Stomach (tissue), 19 donors: ENCODE measurements at regions of chr1 and their contacts with region 1.

Region 1: GRCh38 chr1:211705467-211706091 is 30.2 kb upstream of the NEK2 start:
- DNase-seq: no peak
- H3K4me3 ChIP-seq: no peak overlapping the region
- H3K27ac ChIP-seq: no peak overlapping the region
- H3K4me1 ChIP-seq: peaks cover 0 to 6% (median 0%) of the 10 kb centered on the region in 4 donors
- H3K27me3 ChIP-seq: no peaks in the 10 kb centered on the region
- CTCF ChIP-seq: no peak
- EP300 ChIP-seq: no peak
- POLR2A ChIP-seq: no peak

Region 2: GRCh38 chr1:211247921-211248320 is 457.7 kb before region 1 on chr1:
- intact Hi-C with region 1: no loop called
- DNase-seq: peak in 1 of 2 donors; percentile 50
- H3K4me3 ChIP-seq: no peak overlapping the region
- H3K27ac ChIP-seq: no peak overlapping the region
- H3K4me1 ChIP-seq: no peaks in the 10 kb centered on the region
- H3K27me3 ChIP-seq: peaks cover 0 to 2% (median 0%) of the 10 kb centered on the region in 3 donors
- CTCF ChIP-seq: no peak
- EP300 ChIP-seq: no peak
- POLR2A ChIP-seq: no peak

Region 3: DNA sequence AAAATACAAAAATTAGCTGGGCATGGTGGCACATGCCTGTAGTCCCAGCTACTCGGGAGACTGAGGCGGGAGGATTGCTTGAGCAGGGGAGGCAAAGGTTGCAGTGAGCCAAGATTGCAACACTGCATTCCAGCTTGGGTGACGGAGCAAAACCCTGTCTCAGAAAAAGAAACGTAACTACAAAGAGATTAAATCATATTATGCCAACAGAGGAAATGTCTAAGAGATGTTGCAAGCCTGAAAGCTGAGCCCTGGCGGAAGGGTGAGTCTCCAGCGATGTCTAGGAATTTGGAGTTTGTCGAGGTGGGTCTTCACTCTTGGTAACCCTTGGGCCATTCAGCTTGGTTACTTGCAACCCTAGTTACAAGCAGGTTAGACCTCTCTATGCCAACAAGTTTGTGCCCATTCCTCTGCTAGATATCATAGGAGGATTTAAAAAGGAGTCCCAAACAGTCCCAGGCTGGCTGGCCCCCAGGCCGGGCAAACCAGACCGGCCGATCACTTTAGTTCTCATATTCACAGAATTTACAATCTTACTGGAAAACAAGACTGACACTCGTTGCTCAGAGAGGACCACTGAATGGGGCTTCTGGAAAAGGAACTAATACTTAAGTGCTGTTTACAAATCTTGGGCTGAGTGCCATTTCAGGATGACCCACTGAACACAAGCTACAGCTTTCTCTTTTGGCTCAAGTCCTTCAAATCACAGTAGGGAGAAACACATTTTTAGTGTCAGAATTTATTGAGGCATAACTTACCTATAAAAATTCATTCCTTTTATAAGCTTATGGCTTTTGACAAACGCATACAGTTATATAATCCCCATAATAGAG is 153.7 kb before region 1 on chr1:
- intact Hi-C with region 1: no loop called
- DNase-seq: peak; percentile 10 to 43
- H3K4me3 ChIP-seq: no peak overlapping the region
- H3K27ac ChIP-seq: no peak overlapping the region
- H3K4me1 ChIP-seq: peaks cover 0 to 11% (median 0%) of the 10 kb centered on the region in 4 donors
- H3K27me3 ChIP-seq: no peaks in the 10 kb centered on the region
- CTCF ChIP-seq: no peak
- EP300 ChIP-seq: no peak
- POLR2A ChIP-seq: no peak

Region 4: GRCh38 chr1:211814313-211814712 is 108.7 kb after region 1 on chr1:
- intact Hi-C with region 1: no loop called
- DNase-seq: no peak
- H3K4me3 ChIP-seq: no peak overlapping the region
- H3K27ac ChIP-seq: no peak overlapping the region
- H3K4me1 ChIP-seq: peaks cover 0 to 47% (median 24%) of the 10 kb centered on the region in 4 donors
- H3K27me3 ChIP-seq: no peaks in the 10 kb centered on the region
- CTCF ChIP-seq: no peak
- EP300 ChIP-seq: no peak
- POLR2A ChIP-seq: no peak

Region 5: GRCh38 chr1:211830330-211831142 is 125.0 kb after region 1 on chr1 and contains the start of gene LPGAT1:
- intact Hi-C with region 1: loop called (anchors 10 kb)
- DNase-seq: peak; percentile 82 to 94
- H3K4me3 ChIP-seq: peak within 1 kb of the TSS; percentile 75 to 92 (median 87)
- H3K27ac ChIP-seq: peak within 1 kb of the TSS; percentile 86 to 93 (median 89)
- H3K4me1 ChIP-seq: peaks cover 0 to 59% (median 30%) of the 10 kb centered on the region in 4 donors
- H3K27me3 ChIP-seq: no peaks in the 10 kb centered on the region
- CTCF ChIP-seq: peak in 3 of 7 experiments; percentile 51 to 79 (median 66)
- EP300 ChIP-seq: no peak
- POLR2A ChIP-seq: no peak
- total RNA-seq, gene LPGAT1: 2.9 to 59.3 (median 14.8) TPM